ENCODE measurements at regions of chr1 and their contacts with region 1.

Region 1: DNA sequence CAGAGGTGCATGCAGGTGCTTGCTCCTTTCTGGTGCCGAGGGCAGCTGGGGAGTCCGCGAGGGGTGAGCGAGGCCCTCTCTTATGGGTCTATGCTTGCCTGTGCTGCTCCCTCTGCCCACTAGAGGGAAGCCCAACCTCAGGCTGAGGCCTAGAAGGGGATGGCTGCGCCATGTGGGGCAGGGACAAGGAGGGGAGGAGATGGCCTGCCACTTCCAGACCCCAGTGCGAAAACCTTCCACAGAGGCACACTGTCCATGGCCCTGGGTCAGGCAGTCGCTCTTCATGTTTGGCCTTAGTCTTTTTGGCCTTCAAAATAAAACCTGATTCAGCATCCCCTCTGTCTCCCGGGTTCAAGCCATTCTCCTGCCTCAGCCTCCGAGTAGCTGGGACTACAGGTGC is 14.0 kb downstream of the RHBG start:
- DNase-seq: peak; percentile 70
- ATAC-seq: peak; percentile 87
- H3K4me3 ChIP-seq: no peak overlapping the region
- H3K4me3 Mint-ChIP-seq: no peak overlapping the region
- H3K27ac ChIP-seq: no peak overlapping the region
- H3K27ac Mint-ChIP-seq: no peak overlapping the region
- H3K4me1 ChIP-seq: peaks cover 0 to 11% of the 10 kb centered on the region in 2 donors
- H3K4me1 Mint-ChIP-seq: peaks cover 4% of the 10 kb centered on the region
- H3K27me3 ChIP-seq: peaks cover 0 to 22% (median 9%) of the 10 kb centered on the region in 4 experiments
- H3K27me3 Mint-ChIP-seq: peaks cover 14% of the 10 kb centered on the region
- CTCF ChIP-seq: peak; percentile 78

Region 2: GRCh38 chr1:156054500-156055280 is 328.3 kb before region 1 on chr1 and contains the start of gene LAMTOR2:
- CTCF ChIA-PET with region 1: no interaction called
- POLR2A ChIA-PET with region 1: no interaction called
- intact Hi-C with region 1: no loop called
- DNase-seq: peak; percentile 94
- ATAC-seq: peak; percentile 73
- H3K4me3 ChIP-seq: peak within 1 kb of the TSS; percentile 78 to 99 (median 96)
- H3K4me3 Mint-ChIP-seq: peak within 1 kb of the TSS; percentile 92
- H3K27ac ChIP-seq: peak within 1 kb of the TSS; percentile 77 to 85
- H3K27ac Mint-ChIP-seq: peak within 1 kb of the TSS; percentile 92
- H3K4me1 ChIP-seq: peaks cover 8 to 24% of the 10 kb centered on the region in 2 donors
- H3K4me1 Mint-ChIP-seq: peaks cover 32% of the 10 kb centered on the region
- H3K27me3 ChIP-seq: no peaks in the 10 kb centered on the region
- H3K27me3 Mint-ChIP-seq: no peaks in the 10 kb centered on the region
- CTCF ChIP-seq: no peak
- total RNA-seq, gene LAMTOR2: 31.5 and 37.8 TPM in 2 replicates

Region 3: GRCh38 chr1:156394835-156395461 is 11.9 kb after region 1 on chr1:
- CTCF ChIA-PET with region 1: interaction called, 21 read pairs
- POLR2A ChIA-PET with region 1: no interaction called
- intact Hi-C with region 1: no loop called
- DNase-seq: peak; percentile 43
- ATAC-seq: peak; percentile 33
- H3K4me3 ChIP-seq: no peak overlapping the region
- H3K4me3 Mint-ChIP-seq: no peak overlapping the region
- H3K27ac ChIP-seq: no peak overlapping the region
- H3K27ac Mint-ChIP-seq: no peak overlapping the region
- H3K4me1 ChIP-seq: peaks cover 0 to 5% of the 10 kb centered on the region in 2 donors
- H3K4me1 Mint-ChIP-seq: peaks cover 12% of the 10 kb centered on the region
- H3K27me3 ChIP-seq: peaks cover 0 to 14% (median 2%) of the 10 kb centered on the region in 4 experiments
- H3K27me3 Mint-ChIP-seq: peaks cover 9% of the 10 kb centered on the region
- CTCF ChIP-seq: no peak

Region 4: GRCh38 chr1:156421062-156421938 is 38.3 kb after region 1 on chr1:
- CTCF ChIA-PET with region 1: interaction called, 21 read pairs
- POLR2A ChIA-PET with region 1: no interaction called
- intact Hi-C with region 1: no loop called
- DNase-seq: peak; percentile 79
- ATAC-seq: peak; percentile 73
- H3K4me3 ChIP-seq: peak overlapping the region in 4 of 5 experiments; percentile 41 to 65 (median 61)
- H3K4me3 Mint-ChIP-seq: peak overlapping the region; percentile 92
- H3K27ac ChIP-seq: no peak overlapping the region
- H3K27ac Mint-ChIP-seq: peak overlapping the region; percentile 21
- H3K4me1 ChIP-seq: peaks cover 27 to 29% of the 10 kb centered on the region in 2 donors
- H3K4me1 Mint-ChIP-seq: peaks cover 28% of the 10 kb centered on the region
- H3K27me3 ChIP-seq: peaks cover 0 to 82% (median 44%) of the 10 kb centered on the region in 4 experiments
- H3K27me3 Mint-ChIP-seq: peaks cover 84% of the 10 kb centered on the region
- CTCF ChIP-seq: no peak

Region 5: DNA sequence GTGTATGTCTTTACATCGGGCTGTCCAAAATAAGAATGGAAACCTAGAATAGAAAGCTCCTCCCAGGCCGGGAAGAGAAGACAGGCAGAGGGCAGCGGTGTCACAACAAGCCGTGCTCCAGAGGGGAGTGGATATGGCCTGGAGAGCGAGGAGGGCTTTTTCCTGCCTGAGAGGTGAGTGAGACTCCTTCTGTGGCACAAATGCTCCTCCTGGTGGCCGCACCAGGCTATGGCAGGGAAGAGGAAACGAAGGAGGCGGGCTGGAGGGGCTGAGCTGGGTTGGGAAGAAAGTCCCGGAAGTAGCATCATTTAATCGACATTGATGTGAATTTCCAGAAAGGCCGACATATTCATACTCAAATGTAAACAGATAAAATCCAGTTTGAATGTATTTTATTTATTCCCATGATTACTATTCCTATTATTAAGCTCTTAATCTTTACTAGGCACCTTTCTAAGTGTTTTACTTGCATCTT is 62.8 kb after region 1 on chr1:
- CTCF ChIA-PET with region 1: interaction called, 445 read pairs
- POLR2A ChIA-PET with region 1: interaction called, 3 read pairs
- intact Hi-C with region 1: loop called (anchors 1 kb)
- DNase-seq: peak; percentile 83
- ATAC-seq: peak; percentile 97
- H3K4me3 ChIP-seq: no peak overlapping the region
- H3K4me3 Mint-ChIP-seq: no peak overlapping the region
- H3K27ac ChIP-seq: no peak overlapping the region
- H3K27ac Mint-ChIP-seq: no peak overlapping the region
- H3K4me1 ChIP-seq: peaks cover 4 to 10% of the 10 kb centered on the region in 2 donors
- H3K4me1 Mint-ChIP-seq: no peaks in the 10 kb centered on the region
- H3K27me3 ChIP-seq: peaks cover 0 to 64% (median 41%) of the 10 kb centered on the region in 4 experiments
- H3K27me3 Mint-ChIP-seq: peaks cover 61% of the 10 kb centered on the region
- CTCF ChIP-seq: peak; percentile 92

Region 6: GRCh38 chr1:156583821-156584622 is 201.0 kb after region 1 on chr1:
- CTCF ChIA-PET with region 1: interaction called, 20 read pairs
- POLR2A ChIA-PET with region 1: no interaction called
- intact Hi-C with region 1: no loop called
- DNase-seq: peak; percentile 88
- ATAC-seq: peak; percentile 60
- H3K4me3 ChIP-seq: peak overlapping the region in 1 of 5 experiments; percentile 64
- H3K4me3 Mint-ChIP-seq: peak overlapping the region; percentile 15
- H3K27ac ChIP-seq: peak overlapping the region; percentile 88 to 94
- H3K27ac Mint-ChIP-seq: peak overlapping the region; percentile 76
- H3K4me1 ChIP-seq: peaks cover 26 to 36% of the 10 kb centered on the region in 2 donors
- H3K4me1 Mint-ChIP-seq: peaks cover 32% of the 10 kb centered on the region
- H3K27me3 ChIP-seq: no peaks in the 10 kb centered on the region
- H3K27me3 Mint-ChIP-seq: no peaks in the 10 kb centered on the region
- CTCF ChIP-seq: peak; percentile 94

Region 7: GRCh38 chr1:156625436-156626078 is 242.5 kb after region 1 on chr1:
- CTCF ChIA-PET with region 1: interaction called, 15 read pairs
- POLR2A ChIA-PET with region 1: no interaction called
- intact Hi-C with region 1: no loop called
- DNase-seq: peak; percentile 86
- ATAC-seq: peak; percentile 75
- H3K4me3 ChIP-seq: peak overlapping the region in 4 of 5 experiments; percentile 19 to 50 (median 47)
- H3K4me3 Mint-ChIP-seq: peak overlapping the region; percentile 84
- H3K27ac ChIP-seq: no peak overlapping the region
- H3K27ac Mint-ChIP-seq: peak overlapping the region; percentile 2
- H3K4me1 ChIP-seq: peaks cover 22 to 26% of the 10 kb centered on the region in 2 donors
- H3K4me1 Mint-ChIP-seq: peaks cover 15% of the 10 kb centered on the region
- H3K27me3 ChIP-seq: peaks cover 2 to 66% (median 27%) of the 10 kb centered on the region in 4 experiments
- H3K27me3 Mint-ChIP-seq: peaks cover 49% of the 10 kb centered on the region
- CTCF ChIP-seq: peak; percentile 91

Measured in B cell (primary cell).